Naive thymus-derived CD4-positive, alpha-beta T cell (primary cell): ENCODE measurements at regions of chr19 and their contacts with region 1.

Region 1: GRCh38 chr19:14432791-14433553 is at the start of gene PKN1:
- DNase-seq: peak in 3 of 9 donors; percentile 10 to 79 (median 47)
- ATAC-seq: peak; percentile 23
- H3K4me3 ChIP-seq: peak within 1 kb of the TSS; percentile 67
- H3K4me3 Mint-ChIP-seq: peak within 1 kb of the TSS; percentile 74 to 92 (median 88)
- H3K27ac ChIP-seq: peak within 1 kb of the TSS; percentile 88
- H3K27ac Mint-ChIP-seq: peak within 1 kb of the TSS; percentile 79 to 97 (median 90)
- H3K4me1 ChIP-seq: peaks cover 18 to 24% of the 10 kb centered on the region in 2 donors
- H3K4me1 Mint-ChIP-seq: peaks cover 13 to 48% (median 34%) of the 10 kb centered on the region in 7 donors
- H3K27me3 ChIP-seq: no peaks in the 10 kb centered on the region
- H3K27me3 Mint-ChIP-seq: peaks cover 0 to 14% (median 0%) of the 10 kb centered on the region in 5 donors
- total RNA-seq, gene PKN1: 194 to 211 (median 206) TPM

Region 2: DNA sequence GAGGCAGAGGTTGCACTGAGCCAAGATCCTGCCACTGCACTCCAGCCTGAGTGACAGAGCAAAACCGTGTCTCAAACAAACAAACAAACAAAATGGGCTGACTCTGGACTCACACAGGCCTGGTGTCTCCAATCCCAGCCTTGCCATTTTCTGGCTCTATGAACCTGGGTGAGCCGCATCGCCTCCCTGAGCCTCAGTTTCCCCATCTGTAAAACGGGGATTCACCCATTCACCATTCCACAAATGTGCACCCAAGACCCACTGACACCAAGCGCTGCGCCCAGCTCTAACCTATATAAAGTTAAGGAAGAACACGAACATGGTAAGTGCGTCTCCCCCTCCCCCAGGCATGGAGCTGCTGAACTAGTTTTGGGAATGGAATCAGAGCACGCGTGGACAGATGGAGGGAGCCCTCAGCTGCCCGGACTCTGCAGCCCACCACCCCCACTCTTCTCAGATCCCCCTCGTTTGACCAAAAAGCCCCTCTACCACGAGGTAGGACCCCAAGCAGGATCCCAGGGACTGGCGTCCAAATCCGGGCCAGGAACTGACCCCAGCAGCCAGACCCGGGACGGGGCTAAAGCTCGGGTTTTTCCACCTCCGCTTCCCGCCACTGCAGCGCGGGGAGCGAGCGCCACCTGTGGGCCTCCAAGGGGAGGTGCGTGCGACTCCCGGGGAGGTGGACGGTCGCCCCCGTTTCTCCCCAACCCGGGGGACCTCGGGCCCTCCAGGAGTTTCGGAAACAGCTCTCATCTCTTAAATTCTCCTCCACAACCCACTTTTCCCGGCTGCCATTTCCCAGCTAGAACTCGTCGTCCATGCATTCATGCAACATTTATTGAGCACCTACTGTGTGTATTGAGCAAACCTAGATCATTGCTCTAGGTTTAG is 84.7 kb before region 1 on chr19:
- CTCF ChIA-PET with region 1: no interaction called
- POLR2A ChIA-PET with region 1: no interaction called
- intact Hi-C with region 1: no loop called
- DNase-seq: peak; percentile 43 to 81 (median 59)
- ATAC-seq: peak; percentile 84
- H3K4me3 ChIP-seq: no peak overlapping the region
- H3K4me3 Mint-ChIP-seq: peak overlapping the region; percentile 19 to 82 (median 66)
- H3K27ac ChIP-seq: peak overlapping the region; percentile 38
- H3K27ac Mint-ChIP-seq: peak overlapping the region in 4 of 9 donors; percentile 51 to 80 (median 64)
- H3K4me1 ChIP-seq: peaks cover 8 to 12% of the 10 kb centered on the region in 2 donors
- H3K4me1 Mint-ChIP-seq: peaks cover 9 to 25% (median 19%) of the 10 kb centered on the region in 7 donors
- H3K27me3 ChIP-seq: no peaks in the 10 kb centered on the region
- H3K27me3 Mint-ChIP-seq: no peaks in the 10 kb centered on the region

Region 3: GRCh38 chr19:14472202-14472938 is 39.4 kb after region 1 on chr19:
- CTCF ChIA-PET with region 1: interaction called, 16 read pairs
- POLR2A ChIA-PET with region 1: interaction called, 5 read pairs
- intact Hi-C with region 1: loop called (anchors 1 kb)
- DNase-seq: peak; percentile 65 to 94 (median 82)
- ATAC-seq: peak; percentile 85
- H3K4me3 ChIP-seq: peak overlapping the region; percentile 55
- H3K4me3 Mint-ChIP-seq: peak overlapping the region; percentile 25 to 84 (median 68)
- H3K27ac ChIP-seq: no peak overlapping the region
- H3K27ac Mint-ChIP-seq: peak overlapping the region in 1 of 9 donors; percentile 41
- H3K4me1 ChIP-seq: peaks cover 4 to 17% of the 10 kb centered on the region in 2 donors
- H3K4me1 Mint-ChIP-seq: peaks cover 0 to 39% (median 29%) of the 10 kb centered on the region in 7 donors
- H3K27me3 ChIP-seq: peaks cover 0 to 4% of the 10 kb centered on the region in 2 donors
- H3K27me3 Mint-ChIP-seq: peaks cover 6 to 19% (median 12%) of the 10 kb centered on the region in 5 donors

Region 4: DNA sequence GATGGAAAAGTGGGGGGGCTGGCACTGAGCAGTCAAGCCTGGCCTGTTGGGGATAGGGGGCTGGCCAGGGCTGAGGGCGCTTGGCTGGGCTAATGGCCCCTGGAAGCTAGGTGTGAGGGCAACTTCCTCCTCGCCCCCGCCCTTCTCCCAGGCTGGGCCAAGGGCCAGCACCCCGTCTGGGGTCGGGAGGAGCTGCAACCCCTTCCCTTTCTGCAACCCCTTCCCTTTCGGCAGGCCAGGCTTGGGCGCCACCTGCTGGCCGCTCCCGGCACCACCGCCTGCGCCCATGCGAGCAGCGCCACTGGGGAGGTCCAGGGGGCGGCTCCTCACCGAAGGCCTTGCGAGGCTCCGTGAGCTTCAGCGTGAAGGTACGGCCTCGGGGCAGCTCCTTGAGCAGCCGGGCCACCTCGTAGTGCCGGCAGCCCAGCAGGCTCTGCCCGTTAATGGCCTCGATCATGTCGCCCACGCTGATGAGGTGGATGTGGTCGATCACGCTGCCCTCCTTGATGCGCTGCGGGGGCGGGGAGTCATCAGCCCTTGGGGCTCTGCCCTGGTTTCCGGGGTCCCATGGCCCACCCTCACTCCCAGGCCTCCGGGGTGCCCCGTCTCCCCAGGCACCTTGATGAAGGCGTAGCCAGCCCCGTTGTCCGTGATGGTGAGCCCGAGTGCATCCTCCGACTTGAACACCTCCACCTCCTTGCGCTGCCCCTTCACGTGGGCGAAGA is 47.2 kb after region 1 on chr19:
- CTCF ChIA-PET with region 1: interaction called, 5 read pairs
- POLR2A ChIA-PET with region 1: interaction called, 3 read pairs
- intact Hi-C with region 1: loop called in 1 of 2 experiments (anchors 1 kb)
- DNase-seq: peak; percentile 47 to 87 (median 65)
- ATAC-seq: peak; percentile 67
- H3K4me3 ChIP-seq: no peak overlapping the region
- H3K4me3 Mint-ChIP-seq: no peak overlapping the region
- H3K27ac ChIP-seq: no peak overlapping the region
- H3K27ac Mint-ChIP-seq: no peak overlapping the region
- H3K4me1 ChIP-seq: peaks cover under 1% of the 10 kb centered on the region in 2 donors
- H3K4me1 Mint-ChIP-seq: peaks cover 0 to 17% (median 11%) of the 10 kb centered on the region in 7 donors
- H3K27me3 ChIP-seq: no peaks in the 10 kb centered on the region
- H3K27me3 Mint-ChIP-seq: peaks cover 0 to under 1% (median 0%) of the 10 kb centered on the region in 5 donors

Region 5: DNA sequence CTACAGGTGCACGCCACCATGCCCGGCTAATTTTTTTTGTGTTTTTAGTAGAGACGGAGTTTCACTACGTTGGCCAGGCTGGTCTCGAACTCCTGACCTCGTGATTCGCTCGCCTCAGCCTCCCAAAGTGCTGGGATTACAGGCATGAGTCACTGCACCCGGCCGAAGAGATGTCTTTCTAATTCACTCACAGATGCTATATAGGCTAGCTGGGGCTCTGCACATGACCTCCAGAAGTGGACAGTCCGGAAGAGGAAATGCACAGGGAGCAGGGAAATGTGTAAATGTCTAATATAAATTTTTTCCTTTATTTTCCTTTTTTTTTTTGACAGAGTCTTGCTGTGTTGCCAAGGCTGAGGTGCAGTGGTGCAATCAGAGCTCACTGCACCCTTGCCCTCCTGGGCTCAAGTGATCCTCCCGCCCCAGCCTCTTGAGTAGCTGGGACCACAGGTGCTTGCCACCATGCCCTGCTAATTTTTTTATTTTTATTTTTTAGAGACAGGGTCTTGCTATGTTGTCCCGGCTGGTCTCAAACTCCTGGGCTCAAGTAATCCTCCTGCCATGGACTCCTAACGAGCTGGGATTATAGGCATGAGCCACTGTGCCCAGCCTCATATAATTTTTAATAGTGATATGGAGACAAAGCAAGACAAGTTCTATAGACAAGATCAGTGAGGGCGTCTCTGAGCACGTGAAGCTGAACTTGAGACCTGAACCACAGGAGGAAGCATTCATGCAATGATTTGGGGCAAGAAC is 54.6 kb after region 1 on chr19:
- CTCF ChIA-PET with region 1: interaction called, 6 read pairs
- POLR2A ChIA-PET with region 1: no interaction called
- intact Hi-C with region 1: loop called (anchors 1 to 2 kb)
- DNase-seq: no peak
- ATAC-seq: no peak
- H3K4me3 ChIP-seq: no peak overlapping the region
- H3K4me3 Mint-ChIP-seq: no peak overlapping the region
- H3K27ac ChIP-seq: no peak overlapping the region
- H3K27ac Mint-ChIP-seq: peak overlapping the region in 1 of 9 donors; percentile 48
- H3K4me1 ChIP-seq: peaks cover 0 to 9% of the 10 kb centered on the region in 2 donors
- H3K4me1 Mint-ChIP-seq: peaks cover 5 to 12% (median 11%) of the 10 kb centered on the region in 7 donors
- H3K27me3 ChIP-seq: no peaks in the 10 kb centered on the region
- H3K27me3 Mint-ChIP-seq: no peaks in the 10 kb centered on the region

Region 6: GRCh38 chr19:14516048-14516534 is 83.1 kb after region 1 on chr19:
- CTCF ChIA-PET with region 1: no interaction called
- POLR2A ChIA-PET with region 1: no interaction called
- intact Hi-C with region 1: no loop called
- DNase-seq: no peak
- ATAC-seq: no peak
- H3K4me3 ChIP-seq: peak overlapping the region; percentile 73
- H3K4me3 Mint-ChIP-seq: peak overlapping the region; percentile 88 to 99 (median 95)
- H3K27ac ChIP-seq: peak overlapping the region; percentile 92
- H3K27ac Mint-ChIP-seq: peak overlapping the region; percentile 84 to 99 (median 92)
- H3K4me1 ChIP-seq: peaks cover 41 to 48% of the 10 kb centered on the region in 2 donors
- H3K4me1 Mint-ChIP-seq: peaks cover 36 to 68% (median 58%) of the 10 kb centered on the region in 7 donors
- H3K27me3 ChIP-seq: no peaks in the 10 kb centered on the region
- H3K27me3 Mint-ChIP-seq: peaks cover 0 to 2% (median 0%) of the 10 kb centered on the region in 5 donors

Region 7: GRCh38 chr19:14556662-14557188 is 123.8 kb after region 1 on chr19:
- CTCF ChIA-PET with region 1: no interaction called
- POLR2A ChIA-PET with region 1: no interaction called
- intact Hi-C with region 1: loop called in 1 of 2 experiments (anchors 5 kb)
- DNase-seq: peak; percentile 42 to 75 (median 60)
- ATAC-seq: peak; percentile 91
- H3K4me3 ChIP-seq: peak overlapping the region; percentile 10
- H3K4me3 Mint-ChIP-seq: peak overlapping the region; percentile 29 to 79 (median 68)
- H3K27ac ChIP-seq: no peak overlapping the region
- H3K27ac Mint-ChIP-seq: peak overlapping the region in 8 of 9 donors; percentile 79 to 90 (median 84)
- H3K4me1 ChIP-seq: peaks cover 15 to 53% of the 10 kb centered on the region in 2 donors
- H3K4me1 Mint-ChIP-seq: peaks cover 28 to 71% (median 40%) of the 10 kb centered on the region in 7 donors
- H3K27me3 ChIP-seq: no peaks in the 10 kb centered on the region
- H3K27me3 Mint-ChIP-seq: no peaks in the 10 kb centered on the region

Region 8: DNA sequence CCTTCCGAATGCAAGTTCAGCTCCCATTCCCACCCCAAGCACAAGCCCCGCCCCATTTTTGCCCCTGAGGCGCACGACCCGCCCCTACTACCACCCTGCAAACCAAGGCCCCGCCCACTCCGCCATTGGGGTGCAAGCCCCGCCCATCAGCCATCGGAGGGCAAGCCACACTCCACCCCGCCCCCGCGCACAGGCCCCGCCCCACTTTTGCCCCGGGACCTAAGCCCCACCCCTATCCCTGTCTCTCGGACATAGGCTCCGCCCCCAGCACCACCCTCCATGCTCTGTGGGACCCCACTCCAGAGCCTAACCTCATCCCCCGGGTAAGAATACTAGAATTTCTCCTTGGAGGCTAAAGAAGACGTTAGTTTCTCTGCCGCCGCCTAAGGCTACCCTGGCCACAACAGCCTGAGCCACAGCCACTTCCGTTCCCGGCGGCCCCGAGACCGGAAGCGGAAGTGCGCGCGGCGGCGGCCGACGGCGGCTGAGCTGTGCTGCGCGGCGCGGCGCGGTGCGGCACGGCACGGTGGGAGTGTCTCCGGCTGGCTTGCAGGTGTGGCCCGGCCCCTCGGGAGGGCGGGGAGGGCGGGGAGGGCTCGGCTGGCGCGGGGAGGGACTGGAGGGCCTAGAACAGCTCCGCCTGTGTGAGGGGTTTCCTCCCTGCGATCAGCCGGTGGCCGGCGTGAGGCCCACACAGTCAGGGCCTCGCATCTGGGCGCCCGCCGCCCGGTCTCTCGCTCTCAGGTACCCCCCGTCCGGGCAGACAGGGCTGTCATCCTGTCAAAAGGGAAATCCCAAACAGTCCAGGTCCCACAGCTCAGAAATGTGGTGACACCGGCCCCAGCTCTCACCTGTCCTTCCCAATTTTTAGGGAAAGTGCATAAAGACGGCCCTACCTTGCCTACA is 256.9 kb after region 1 on chr19 and contains the start of gene ZNF333:
- CTCF ChIA-PET with region 1: no interaction called
- POLR2A ChIA-PET with region 1: no interaction called
- intact Hi-C with region 1: loop called in 1 of 2 experiments (anchors 5 kb)
- DNase-seq: peak; percentile 92 to 99 (median 96)
- ATAC-seq: peak; percentile 94
- H3K4me3 ChIP-seq: peak within 1 kb of the TSS; percentile 93
- H3K4me3 Mint-ChIP-seq: peak within 1 kb of the TSS; percentile 81 to 99 (median 94)
- H3K27ac ChIP-seq: peak within 1 kb of the TSS; percentile 97
- H3K27ac Mint-ChIP-seq: peak within 1 kb of the TSS; percentile 93 to 100 (median 99)
- H3K4me1 ChIP-seq: peaks cover 6 to 16% of the 10 kb centered on the region in 2 donors
- H3K4me1 Mint-ChIP-seq: peaks cover 5 to 26% (median 23%) of the 10 kb centered on the region in 7 donors
- H3K27me3 ChIP-seq: no peaks in the 10 kb centered on the region
- H3K27me3 Mint-ChIP-seq: peaks cover 0 to 2% (median 0%) of the 10 kb centered on the region in 5 donors
- total RNA-seq, gene ZNF333: 15.4 to 56.3 (median 34.7) TPM

Region 9: GRCh38 chr19:14890643-14891379 is 457.8 kb after region 1 on chr19:
- CTCF ChIA-PET with region 1: no interaction called
- POLR2A ChIA-PET with region 1: no interaction called
- intact Hi-C with region 1: loop called in 1 of 2 experiments (anchors 5 kb)
- DNase-seq: no peak
- ATAC-seq: no peak
- H3K4me3 ChIP-seq: no peak overlapping the region
- H3K4me3 Mint-ChIP-seq: no peak overlapping the region
- H3K27ac ChIP-seq: no peak overlapping the region
- H3K27ac Mint-ChIP-seq: no peak overlapping the region
- H3K4me1 ChIP-seq: no peaks in the 10 kb centered on the region
- H3K4me1 Mint-ChIP-seq: peaks cover 0 to 7% (median 5%) of the 10 kb centered on the region in 7 donors
- H3K27me3 ChIP-seq: peaks cover 0 to 6% of the 10 kb centered on the region in 2 donors
- H3K27me3 Mint-ChIP-seq: peaks cover 18 to 48% (median 38%) of the 10 kb centered on the region in 5 donors